HCT116 (cell line): ENCODE measurements at regions of chr2 and their contacts with region 1.

Region 1: GRCh38 chr2:108449494-108450130 is 606 bp downstream of the GCC2 start:
- DNase-seq: no peak
- ATAC-seq: peak; percentile 6; the same call in 1 of the 2 replicates
- H3K4me3 ChIP-seq: peak overlapping the region; percentile 96 to 98
- H3K27ac ChIP-seq: peak overlapping the region; percentile 75
- H3K4me1 ChIP-seq: peaks cover 5 to 12% of the 10 kb centered on the region in 2 experiments; a peak in 3 of 4 replicates
- H3K27me3 ChIP-seq: no peaks in the 10 kb centered on the region
- CTCF ChIP-seq: no peak
- POLR2A ChIP-seq: no peak
- RAD21 ChIP-seq: no peak

Region 2: GRCh38 chr2:108533832-108534583 is 84.4 kb after region 1 on chr2 and contains the start of gene LIMS1:
- CTCF ChIA-PET with region 1: no interaction called
- POLR2A ChIA-PET with region 1: interaction called, 5 read pairs
- RAD21 ChIA-PET with region 1: no interaction called
- intact Hi-C with region 1: loop called (anchors 10 kb)
- DNase-seq: peak; percentile 83
- ATAC-seq: peak; percentile 90
- H3K4me3 ChIP-seq: peak within 1 kb of the TSS; percentile 65 to 84
- H3K27ac ChIP-seq: peak within 1 kb of the TSS; percentile 98
- H3K4me1 ChIP-seq: peaks cover 14 to 28% of the 10 kb centered on the region in 2 experiments
- H3K27me3 ChIP-seq: no peaks in the 10 kb centered on the region
- CTCF ChIP-seq: no peak
- POLR2A ChIP-seq: peak; percentile 69
- RAD21 ChIP-seq: no peak
- total RNA-seq, gene LIMS1: 56.2 TPM